Ascending aorta (tissue), 2 donors: ENCODE measurements at regions of chr15 and their contacts with region 1.

Region 1: DNA sequence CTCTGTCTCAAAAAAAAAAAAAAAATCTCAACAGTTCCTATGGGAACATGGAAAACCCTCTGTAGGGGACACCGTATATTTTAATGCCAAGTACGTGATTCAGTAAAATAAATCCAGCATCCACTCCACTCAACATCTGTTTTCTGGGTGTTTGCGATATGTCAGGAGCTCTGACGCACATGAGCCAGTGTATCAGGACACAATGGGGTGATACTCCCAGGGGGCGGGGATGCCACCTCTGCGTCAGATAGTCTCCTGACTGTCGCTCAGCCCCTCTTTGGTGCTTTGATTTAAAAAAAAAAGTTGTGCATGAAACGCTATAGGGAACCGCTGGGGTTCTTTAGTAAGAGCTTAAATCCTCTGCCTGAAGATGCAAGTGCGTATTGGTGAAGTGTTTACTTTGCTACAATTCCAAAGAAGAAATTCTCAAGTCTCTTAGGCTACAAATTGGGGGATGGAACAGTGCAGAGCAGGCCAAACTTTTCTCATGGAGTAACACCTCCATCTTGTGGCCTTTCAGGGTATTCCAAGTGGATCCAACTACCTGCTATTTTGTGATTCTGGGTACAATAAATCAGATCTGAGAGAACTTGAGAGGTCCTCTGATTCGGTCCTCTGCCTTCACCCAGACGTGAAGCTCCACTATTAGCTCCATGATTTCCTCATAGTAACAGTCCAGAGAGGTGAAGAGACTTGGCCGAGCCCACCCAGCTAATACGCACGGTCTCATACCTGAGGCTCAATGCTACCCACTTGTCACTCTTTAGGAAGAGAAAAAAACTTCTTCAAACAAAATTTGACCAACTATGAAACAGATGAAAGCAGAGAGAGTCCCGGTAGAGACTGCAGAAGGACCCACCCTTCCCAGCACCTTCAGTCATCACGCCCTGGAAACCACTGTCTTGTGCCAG is 9.3 kb upstream of the NR2E3 start:
- DNase-seq: no peak
- H3K4me3 ChIP-seq: no peak overlapping the region
- H3K27ac ChIP-seq: no peak overlapping the region
- H3K4me1 ChIP-seq: no peaks in the 10 kb centered on the region
- H3K27me3 ChIP-seq: no peaks in the 10 kb centered on the region
- CTCF ChIP-seq: peak; percentile 81 to 89 (median 81)

Region 2: DNA sequence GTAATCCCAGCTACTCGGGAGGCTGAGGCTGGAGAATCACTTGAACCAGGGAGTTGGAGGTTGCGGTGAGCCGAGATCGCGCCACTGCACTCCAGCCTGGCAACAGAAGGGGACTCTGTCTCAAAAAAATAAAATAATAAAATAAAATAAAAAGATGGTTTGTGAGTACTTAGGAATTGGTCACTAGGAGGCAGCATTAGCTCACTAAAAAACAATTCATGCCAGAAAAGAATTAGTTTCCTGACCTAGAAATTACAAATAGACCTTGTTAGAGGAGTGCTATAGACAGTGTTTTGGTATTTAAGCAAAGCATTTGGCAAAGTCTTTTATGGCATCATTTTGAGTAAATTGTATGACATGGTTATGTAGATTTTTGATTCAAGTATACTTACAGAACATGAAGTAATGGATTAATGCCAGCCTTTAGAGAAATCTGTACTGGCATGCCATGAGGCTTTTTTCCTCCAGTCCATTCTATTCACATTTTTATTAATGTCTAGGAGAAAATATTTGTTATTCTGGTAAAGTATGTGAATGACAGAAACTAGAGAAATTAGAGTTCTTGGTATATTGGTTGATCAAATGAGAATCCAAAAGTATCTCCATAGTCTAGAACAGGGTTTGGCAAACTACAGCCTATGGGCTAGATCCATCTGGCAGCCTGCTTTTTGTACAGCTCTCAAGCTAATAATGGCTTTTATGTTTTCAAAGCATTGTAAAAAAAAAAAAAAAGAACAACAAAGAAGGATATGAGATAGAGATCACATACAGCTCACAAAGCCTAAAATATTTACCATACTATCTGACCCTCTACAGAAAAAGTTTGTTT is 826.9 kb before region 1 on chr15:
- intact Hi-C with region 1: loop called (anchors 10 kb)
- DNase-seq: no peak
- H3K4me3 ChIP-seq: no peak overlapping the region
- H3K27ac ChIP-seq: no peak overlapping the region
- H3K4me1 ChIP-seq: peaks cover 0 to 2% of the 10 kb centered on the region in 2 donors
- H3K27me3 ChIP-seq: no peaks in the 10 kb centered on the region
- CTCF ChIP-seq: peak; percentile 34 to 61 (median 38)

Region 3: GRCh38 chr15:71386448-71387236 is 414.4 kb before region 1 on chr15:
- intact Hi-C with region 1: loop called (anchors 2 kb)
- DNase-seq: no peak
- H3K4me3 ChIP-seq: no peak overlapping the region
- H3K27ac ChIP-seq: peak overlapping the region in 1 of 2 donors; percentile 13
- H3K4me1 ChIP-seq: peaks cover 6 to 28% of the 10 kb centered on the region in 2 donors
- H3K27me3 ChIP-seq: no peaks in the 10 kb centered on the region
- CTCF ChIP-seq: peak; percentile 50 to 65 (median 52)

Region 4: GRCh38 chr15:71651750-71652186 is 149.3 kb before region 1 on chr15:
- intact Hi-C with region 1: loop called (anchors 5 kb)
- DNase-seq: peak in 1 of 2 donors; percentile 71
- H3K4me3 ChIP-seq: no peak overlapping the region
- H3K27ac ChIP-seq: no peak overlapping the region
- H3K4me1 ChIP-seq: peaks cover 3 to 30% of the 10 kb centered on the region in 2 donors
- H3K27me3 ChIP-seq: no peaks in the 10 kb centered on the region
- CTCF ChIP-seq: peak in 2 of 3 experiments; percentile 40 to 49

Region 5: DNA sequence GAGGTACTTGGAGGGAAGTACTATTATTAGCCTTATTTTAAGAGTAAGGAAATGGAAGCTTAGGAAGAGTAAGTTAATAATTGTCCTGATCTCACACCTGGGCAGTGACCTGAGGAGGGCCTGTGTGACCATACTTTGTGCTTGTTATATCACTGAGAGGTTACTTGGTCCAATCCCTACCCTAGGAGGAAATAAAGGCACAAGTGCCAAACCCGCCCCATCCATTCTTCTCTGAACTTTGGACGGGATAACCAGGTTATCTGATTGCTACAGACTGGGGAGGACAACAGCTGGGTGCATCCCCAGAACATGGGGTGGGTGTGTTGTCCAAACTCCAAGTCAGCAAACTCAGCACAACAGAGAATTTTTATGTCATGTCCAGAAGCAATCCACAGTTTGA is 68.5 kb before region 1 on chr15:
- intact Hi-C with region 1: no loop called
- DNase-seq: no peak
- H3K4me3 ChIP-seq: no peak overlapping the region
- H3K27ac ChIP-seq: no peak overlapping the region
- H3K4me1 ChIP-seq: peaks cover 0 to 14% of the 10 kb centered on the region in 2 donors
- H3K27me3 ChIP-seq: no peaks in the 10 kb centered on the region
- CTCF ChIP-seq: no peak

Region 6: DNA sequence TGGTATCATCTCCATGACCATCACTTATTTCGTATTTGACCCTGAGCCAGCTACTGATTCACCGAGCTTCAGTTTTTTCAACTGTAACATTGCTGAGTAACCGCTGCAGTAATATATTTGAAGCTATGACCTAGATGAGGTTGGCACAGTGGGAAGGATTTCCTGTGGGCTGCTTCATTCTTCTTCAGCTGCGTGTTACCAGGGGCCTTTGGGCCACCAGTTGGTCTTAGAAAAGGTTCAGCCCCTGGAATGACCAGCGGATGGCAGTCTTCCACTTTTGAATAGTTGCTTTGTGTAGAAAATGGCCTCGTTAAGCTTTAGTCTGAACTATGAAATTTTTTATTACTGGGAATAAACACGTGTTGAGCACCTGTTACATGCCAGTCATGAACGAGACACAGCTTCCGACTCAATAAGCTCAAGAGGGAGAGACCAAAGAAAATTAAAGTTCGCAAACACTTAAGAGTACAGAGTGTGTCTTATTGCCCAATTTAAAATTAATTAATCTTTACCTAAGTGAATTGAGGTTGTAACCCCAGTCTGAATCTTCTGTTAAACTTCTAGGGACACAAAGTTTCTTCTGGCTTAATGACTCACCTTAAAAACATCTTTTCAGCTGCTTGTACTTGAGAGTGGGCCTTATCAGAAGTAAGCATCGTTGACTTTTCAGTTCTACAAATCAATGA is 48.3 kb before region 1 on chr15:
- intact Hi-C with region 1: loop called (anchors 2 kb)
- DNase-seq: peak; percentile 33 to 90
- H3K4me3 ChIP-seq: peak overlapping the region in 1 of 2 donors; percentile 6
- H3K27ac ChIP-seq: peak overlapping the region; percentile 65 to 82
- H3K4me1 ChIP-seq: peaks cover 0 to 9% of the 10 kb centered on the region in 2 donors
- H3K27me3 ChIP-seq: no peaks in the 10 kb centered on the region
- CTCF ChIP-seq: peak; percentile 45 to 65 (median 63)